ENCODE measurements at regions of chr7 and their contacts with region 1.

Region 1: DNA sequence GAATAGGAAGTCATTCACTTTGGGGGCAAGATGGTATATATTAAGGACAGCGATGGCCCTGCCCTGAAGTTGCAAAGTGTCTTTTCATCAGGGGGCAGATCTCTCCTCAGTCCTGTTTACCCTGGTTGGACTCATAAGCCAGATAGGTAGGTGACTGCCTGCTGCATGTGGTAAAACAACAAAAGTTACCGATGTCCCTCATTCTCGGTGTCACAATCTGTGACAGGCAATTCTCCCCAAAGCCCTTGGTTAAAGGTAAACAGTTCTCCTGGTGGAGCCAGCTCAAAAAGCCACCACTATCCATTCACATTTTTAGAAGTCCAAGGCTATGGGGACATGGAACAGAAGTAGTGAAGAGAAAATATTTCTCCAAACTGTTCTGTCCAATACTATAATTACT is 9.9 kb upstream of the SLC25A13 start:
- DNase-seq: no peak
- H3K4me3 ChIP-seq: no peak overlapping the region
- H3K27ac ChIP-seq: no peak overlapping the region
- H3K4me1 ChIP-seq: peaks cover 0 to 3% of the 10 kb centered on the region in 2 experiments; a peak in 1 of 4 replicates
- H3K27me3 ChIP-seq: no peaks in the 10 kb centered on the region
- CTCF ChIP-seq: no peak
- EP300 ChIP-seq: no peak
- RAD21 ChIP-seq: no peak

Region 2: DNA sequence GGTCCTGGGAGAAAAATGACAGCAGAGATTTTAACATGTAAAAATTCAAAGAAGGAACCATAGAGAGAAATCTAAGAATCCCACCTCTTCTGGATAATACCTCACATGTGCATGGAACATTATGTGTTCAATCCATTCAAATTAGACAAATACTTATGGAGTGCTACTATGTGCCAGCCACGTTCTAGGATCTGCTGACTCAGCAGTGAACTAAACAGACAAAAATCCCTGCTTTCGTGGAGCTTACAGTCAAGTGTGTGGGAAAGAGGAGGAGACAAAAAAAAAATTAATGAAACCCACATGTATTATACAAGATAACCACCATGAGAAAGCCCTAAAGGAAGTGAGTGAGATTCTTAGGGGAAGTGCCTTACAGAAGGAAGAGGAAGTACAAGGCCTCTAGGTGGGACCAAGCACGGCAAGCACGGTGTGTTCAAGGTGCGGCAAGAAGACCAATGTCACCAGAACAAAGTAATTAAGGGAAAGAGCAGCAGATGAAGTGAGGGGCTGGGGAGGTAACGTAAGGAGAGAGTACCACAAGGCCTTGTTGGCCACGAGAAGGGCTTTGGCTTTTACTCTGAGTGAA is 80.9 kb before region 1 on chr7:
- CTCF ChIA-PET with region 1: no interaction called
- POLR2A ChIA-PET with region 1: no interaction called
- DNase-seq: no peak
- H3K4me3 ChIP-seq: no peak overlapping the region
- H3K27ac ChIP-seq: no peak overlapping the region
- H3K4me1 ChIP-seq: no peaks in the 10 kb centered on the region
- H3K27me3 ChIP-seq: no peaks in the 10 kb centered on the region
- CTCF ChIP-seq: no peak
- EP300 ChIP-seq: no peak
- RAD21 ChIP-seq: no peak

Region 3: GRCh38 chr7:96346293-96346953 is 14.6 kb after region 1 on chr7:
- CTCF ChIA-PET with region 1: interaction called, 10 read pairs
- POLR2A ChIA-PET with region 1: no interaction called
- DNase-seq: no peak
- H3K4me3 ChIP-seq: no peak overlapping the region
- H3K27ac ChIP-seq: no peak overlapping the region
- H3K4me1 ChIP-seq: no peaks in the 10 kb centered on the region
- H3K27me3 ChIP-seq: no peaks in the 10 kb centered on the region
- CTCF ChIP-seq: no peak
- EP300 ChIP-seq: no peak
- RAD21 ChIP-seq: no peak